ENCODE measurements at regions of chr18 and their contacts with region 1.

Region 1: DNA sequence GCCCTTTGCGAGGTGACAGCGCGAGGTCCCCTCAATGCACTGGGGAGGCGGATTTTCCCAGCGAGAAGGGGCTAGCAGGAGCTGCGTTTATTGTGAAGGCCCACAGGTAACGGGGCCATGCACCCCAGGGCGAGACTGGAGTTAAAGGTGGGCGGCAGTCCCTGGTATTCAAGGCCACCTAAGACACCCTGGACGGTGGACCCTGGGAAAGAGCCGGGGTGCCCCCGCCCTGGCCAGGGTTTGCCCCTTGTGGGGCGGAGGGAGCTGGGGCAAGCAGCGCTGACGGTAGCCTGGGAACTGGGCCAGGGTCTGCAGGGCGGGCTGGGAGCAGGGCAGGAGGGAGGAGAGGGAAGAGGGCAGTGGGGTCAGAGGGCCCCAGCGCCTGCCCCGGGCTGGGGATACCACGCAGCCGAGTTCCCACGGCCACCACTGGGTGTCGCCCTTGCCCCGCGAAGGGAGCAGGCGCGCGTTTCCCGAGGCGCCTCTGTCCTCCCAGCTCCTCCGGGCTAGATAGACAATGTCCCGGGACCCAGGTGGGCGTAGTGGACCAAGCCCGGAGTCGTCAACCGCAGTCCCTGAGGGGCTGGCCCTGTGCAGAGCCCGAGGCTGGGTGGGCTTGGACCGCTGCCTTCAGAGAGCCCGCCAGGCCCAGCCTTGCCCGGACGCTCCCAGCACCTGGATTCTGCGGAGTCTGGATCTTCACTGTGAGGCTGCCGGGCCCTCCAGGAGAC is 80.2 kb downstream of the SMAD4 start:
- DNase-seq: peak; percentile 41 to 55 (median 45)
- H3K4me3 ChIP-seq: no peak overlapping the region
- H3K4me3 Mint-ChIP-seq: no peak overlapping the region
- H3K27ac ChIP-seq: no peak overlapping the region
- H3K27ac Mint-ChIP-seq: no peak overlapping the region
- H3K4me1 ChIP-seq: peaks cover 7% of the 10 kb centered on the region
- H3K4me1 Mint-ChIP-seq: peaks cover 5 to 23% (median 11%) of the 10 kb centered on the region in 4 donors
- H3K27me3 ChIP-seq: no peaks in the 10 kb centered on the region
- H3K27me3 Mint-ChIP-seq: no peaks in the 10 kb centered on the region

Region 2: DNA sequence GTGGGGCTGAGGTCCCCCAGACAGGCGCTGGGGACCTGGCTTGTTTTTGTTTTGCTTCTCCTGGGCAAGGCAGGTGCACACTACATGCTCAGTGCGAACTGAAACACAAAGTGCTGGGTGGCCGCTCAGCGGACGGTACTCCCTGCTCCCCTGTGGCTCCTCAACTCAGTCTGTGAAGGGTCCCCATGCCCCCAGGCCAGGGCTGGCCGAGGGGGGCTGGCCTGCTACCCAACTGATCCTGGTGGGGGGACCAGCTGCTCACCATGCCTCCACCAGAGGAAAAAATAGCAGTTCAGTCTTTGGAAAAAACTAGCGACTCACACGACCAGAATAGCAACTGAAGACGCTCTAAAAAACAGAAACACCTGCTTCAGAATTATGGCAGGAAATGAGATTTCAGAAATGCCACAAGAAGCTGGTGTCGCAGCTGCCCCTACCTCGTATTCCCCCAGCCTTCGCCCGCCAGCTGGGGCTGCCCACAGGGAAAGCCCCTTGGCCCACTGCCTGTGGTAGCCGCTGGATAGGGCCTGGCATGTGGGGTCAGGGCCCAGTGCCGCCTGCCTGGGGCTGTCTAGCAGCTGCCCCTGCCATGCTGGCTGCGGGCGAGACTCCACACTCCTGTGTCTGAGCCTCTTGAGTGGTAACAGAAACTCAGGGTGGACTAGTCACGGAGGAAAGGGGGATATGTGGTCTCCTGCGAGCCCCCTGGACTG is 43.6 kb after region 1 on chr18:
- CTCF ChIA-PET with region 1: interaction called, 5 read pairs
- POLR2A ChIA-PET with region 1: no interaction called
- intact Hi-C with region 1: loop called (anchors 1 kb)
- DNase-seq: peak; percentile 26 to 69 (median 46)
- H3K4me3 ChIP-seq: peak overlapping the region; percentile 47 to 53
- H3K4me3 Mint-ChIP-seq: peak overlapping the region; percentile 81 to 90 (median 85)
- H3K27ac ChIP-seq: peak overlapping the region; percentile 50
- H3K27ac Mint-ChIP-seq: peak overlapping the region; percentile 78 to 92 (median 87)
- H3K4me1 ChIP-seq: peaks cover 36% of the 10 kb centered on the region
- H3K4me1 Mint-ChIP-seq: peaks cover 20 to 41% (median 29%) of the 10 kb centered on the region in 4 donors
- H3K27me3 ChIP-seq: no peaks in the 10 kb centered on the region
- H3K27me3 Mint-ChIP-seq: no peaks in the 10 kb centered on the region

Region 3: DNA sequence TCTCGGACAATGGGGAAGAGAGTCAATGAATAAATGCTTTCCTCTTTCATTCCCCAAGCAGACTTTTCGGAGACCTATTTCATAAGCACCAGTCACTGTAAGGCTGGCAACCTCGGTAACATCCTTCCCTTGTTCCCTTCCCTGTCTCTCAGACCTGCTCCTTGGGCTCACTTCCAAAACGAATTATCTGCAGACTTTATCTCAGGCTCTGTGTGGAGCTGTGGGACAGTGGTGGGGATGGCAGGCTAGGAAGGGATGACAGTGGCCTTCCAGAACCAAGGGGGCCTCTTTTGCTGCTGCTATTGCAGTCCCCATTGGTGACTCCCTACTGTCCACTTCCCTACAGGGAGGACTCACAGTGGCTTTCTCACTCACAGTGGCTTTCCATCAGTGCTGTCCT is 272.9 kb after region 1 on chr18:
- CTCF ChIA-PET with region 1: interaction called, 5 read pairs
- POLR2A ChIA-PET with region 1: no interaction called
- intact Hi-C with region 1: loop called (anchors 10 kb)
- DNase-seq: no peak
- H3K4me3 ChIP-seq: no peak overlapping the region
- H3K4me3 Mint-ChIP-seq: no peak overlapping the region
- H3K27ac ChIP-seq: no peak overlapping the region
- H3K27ac Mint-ChIP-seq: no peak overlapping the region
- H3K4me1 ChIP-seq: no peaks in the 10 kb centered on the region
- H3K4me1 Mint-ChIP-seq: no peaks in the 10 kb centered on the region
- H3K27me3 ChIP-seq: no peaks in the 10 kb centered on the region
- H3K27me3 Mint-ChIP-seq: no peaks in the 10 kb centered on the region

Region 4: DNA sequence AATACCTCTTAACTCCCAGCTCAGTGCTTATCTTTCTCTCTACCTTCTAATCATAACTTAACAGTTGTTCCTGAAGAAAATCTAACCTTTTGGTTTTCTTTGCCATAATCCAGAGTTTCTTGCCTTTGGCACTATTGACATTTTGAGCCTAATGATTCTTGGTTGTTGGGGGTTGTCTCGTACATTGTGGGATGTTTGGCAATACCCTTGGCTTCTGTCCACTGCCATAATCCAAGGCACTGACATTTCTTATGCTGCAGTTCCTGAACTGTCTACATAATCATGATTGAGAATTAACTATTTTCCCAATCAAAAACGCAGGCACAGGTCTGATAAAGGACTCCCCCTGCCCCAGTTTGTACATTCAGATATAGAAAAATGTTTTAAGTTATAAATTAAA is 290.5 kb after region 1 on chr18:
- CTCF ChIA-PET with region 1: no interaction called
- POLR2A ChIA-PET with region 1: no interaction called
- intact Hi-C with region 1: no loop called
- DNase-seq: no peak
- H3K4me3 ChIP-seq: no peak overlapping the region
- H3K4me3 Mint-ChIP-seq: no peak overlapping the region
- H3K27ac ChIP-seq: no peak overlapping the region
- H3K27ac Mint-ChIP-seq: no peak overlapping the region
- H3K4me1 ChIP-seq: no peaks in the 10 kb centered on the region
- H3K4me1 Mint-ChIP-seq: no peaks in the 10 kb centered on the region
- H3K27me3 ChIP-seq: peaks cover 3% of the 10 kb centered on the region
- H3K27me3 Mint-ChIP-seq: peaks cover 3% of the 10 kb centered on the region in 2 donors

Region 5: GRCh38 chr18:51417643-51418483 is 307.6 kb after region 1 on chr18:
- CTCF ChIA-PET with region 1: no interaction called
- POLR2A ChIA-PET with region 1: no interaction called
- intact Hi-C with region 1: no loop called
- DNase-seq: no peak
- H3K4me3 ChIP-seq: no peak overlapping the region
- H3K4me3 Mint-ChIP-seq: no peak overlapping the region
- H3K27ac ChIP-seq: no peak overlapping the region
- H3K27ac Mint-ChIP-seq: no peak overlapping the region
- H3K4me1 ChIP-seq: no peaks in the 10 kb centered on the region
- H3K4me1 Mint-ChIP-seq: no peaks in the 10 kb centered on the region
- H3K27me3 ChIP-seq: no peaks in the 10 kb centered on the region
- H3K27me3 Mint-ChIP-seq: no peaks in the 10 kb centered on the region

Region 6: DNA sequence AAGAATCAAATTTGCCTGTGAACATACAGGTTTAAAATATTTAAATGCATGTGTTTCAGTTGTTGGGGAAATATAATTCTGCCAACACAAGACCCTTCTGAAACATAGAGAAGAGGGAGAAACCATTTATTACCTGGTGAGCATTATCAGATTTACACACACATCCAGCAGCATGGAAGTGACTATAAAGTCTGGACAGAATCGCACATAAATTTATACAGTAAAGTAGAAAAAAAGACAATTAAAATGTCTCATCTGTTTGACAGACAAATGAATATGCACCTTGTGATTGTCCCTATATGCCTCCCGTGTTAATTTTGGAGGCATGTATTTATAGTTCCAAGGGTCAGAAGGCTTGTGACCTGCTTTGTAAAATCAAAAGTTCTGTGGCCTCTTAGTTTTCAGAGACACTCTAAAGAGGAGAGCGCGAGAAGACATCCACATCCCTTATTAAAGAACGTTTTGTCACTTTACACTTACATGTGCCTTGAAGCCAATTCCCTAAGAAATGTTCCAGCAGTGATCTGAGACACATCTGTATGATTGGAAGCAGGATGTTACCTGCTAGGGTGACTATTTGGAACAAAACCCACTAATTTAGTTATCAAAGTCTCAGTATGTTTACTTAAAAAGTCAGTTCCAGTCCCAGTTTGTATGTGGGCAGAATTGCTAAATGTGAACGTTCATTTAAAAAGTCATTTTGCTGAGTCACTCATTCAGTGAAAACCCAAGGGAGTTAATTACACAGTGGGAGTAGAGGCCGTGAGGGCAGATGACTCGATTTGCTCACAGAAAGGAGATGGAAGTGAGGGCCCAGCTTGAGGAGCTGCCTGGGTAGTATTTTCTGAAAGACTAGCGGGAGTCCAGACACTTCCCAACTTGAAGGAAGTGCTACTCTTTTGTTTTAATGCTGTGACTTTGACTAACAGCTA is 614.8 kb after region 1 on chr18:
- CTCF ChIA-PET with region 1: interaction called, 13 read pairs
- POLR2A ChIA-PET with region 1: no interaction called
- intact Hi-C with region 1: loop called (anchors 1 kb)
- DNase-seq: no peak
- H3K4me3 ChIP-seq: no peak overlapping the region
- H3K4me3 Mint-ChIP-seq: no peak overlapping the region
- H3K27ac ChIP-seq: no peak overlapping the region
- H3K27ac Mint-ChIP-seq: no peak overlapping the region
- H3K4me1 ChIP-seq: no peaks in the 10 kb centered on the region
- H3K4me1 Mint-ChIP-seq: no peaks in the 10 kb centered on the region
- H3K27me3 ChIP-seq: no peaks in the 10 kb centered on the region
- H3K27me3 Mint-ChIP-seq: peaks cover 0 to 2% of the 10 kb centered on the region in 2 donors